ENCODE measurements at regions of chr14 and their contacts with region 1.

Region 1: GRCh38 chr14:105448706-105449111 is 25.9 kb upstream of the CRIP2 start:
- DNase-seq: peak; percentile 55 to 82 (median 65)
- ATAC-seq: peak; percentile 100
- H3K4me3 ChIP-seq: no peak overlapping the region
- H3K4me3 Mint-ChIP-seq: no peak overlapping the region
- H3K27ac ChIP-seq: no peak overlapping the region
- H3K27ac Mint-ChIP-seq: no peak overlapping the region
- H3K4me1 ChIP-seq: peaks cover 7% of the 10 kb centered on the region
- H3K4me1 Mint-ChIP-seq: no peaks in the 10 kb centered on the region
- H3K27me3 ChIP-seq: no peaks in the 10 kb centered on the region
- H3K27me3 Mint-ChIP-seq: no peaks in the 10 kb centered on the region
- CTCF ChIP-seq: peak; percentile 75

Region 2: DNA sequence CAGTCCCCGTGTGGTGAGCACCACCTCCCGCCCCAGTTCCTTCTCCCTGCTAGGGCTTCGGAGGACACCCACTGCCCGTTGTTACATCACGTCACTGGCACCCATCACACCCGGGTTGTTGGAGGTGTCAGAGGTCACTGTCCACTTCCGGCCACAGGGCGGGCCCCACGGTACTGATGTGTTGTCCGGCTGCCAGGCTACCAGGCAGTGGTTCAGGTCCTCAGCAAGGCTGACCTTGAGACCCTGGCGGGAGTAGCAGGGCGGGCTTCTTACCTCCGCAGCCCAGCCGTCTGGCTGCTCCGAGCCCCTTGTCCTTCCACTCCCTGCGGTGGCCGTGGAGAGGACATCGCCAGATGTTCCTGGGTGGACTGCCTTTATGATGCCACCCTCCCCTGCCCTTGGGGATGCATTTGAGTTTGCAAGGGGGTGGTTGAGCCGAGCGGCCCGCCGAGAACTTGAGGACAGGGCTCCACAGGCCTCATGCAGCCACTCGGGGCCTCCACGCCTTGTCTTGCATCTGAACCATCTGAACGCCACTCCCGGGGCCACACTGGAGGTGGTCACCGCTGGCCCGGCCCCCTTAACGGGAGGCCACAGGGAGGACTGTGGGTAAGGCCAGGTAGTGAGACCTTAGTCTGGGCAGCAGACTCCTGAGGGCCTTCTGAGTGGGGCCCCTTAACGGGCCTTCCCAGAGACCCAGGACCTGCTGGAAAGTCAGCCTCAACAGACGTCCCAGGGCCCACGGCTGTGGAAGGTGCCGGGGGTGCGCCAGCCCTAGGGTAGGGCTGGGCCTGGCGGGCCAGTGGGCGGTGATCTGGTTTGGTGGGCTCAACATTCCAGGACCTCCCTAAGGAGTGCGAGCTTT is 551.1 kb before region 1 on chr14:
- CTCF ChIA-PET with region 1: no interaction called
- POLR2A ChIA-PET with region 1: no interaction called
- intact Hi-C with region 1: no loop called
- DNase-seq: peak in 1 of 14 experiments; percentile 27
- ATAC-seq: no peak
- H3K4me3 ChIP-seq: no peak overlapping the region
- H3K4me3 Mint-ChIP-seq: no peak overlapping the region
- H3K27ac ChIP-seq: no peak overlapping the region
- H3K27ac Mint-ChIP-seq: no peak overlapping the region
- H3K4me1 ChIP-seq: no peaks in the 10 kb centered on the region
- H3K4me1 Mint-ChIP-seq: peaks cover 4% of the 10 kb centered on the region
- H3K27me3 ChIP-seq: no peaks in the 10 kb centered on the region
- H3K27me3 Mint-ChIP-seq: no peaks in the 10 kb centered on the region
- CTCF ChIP-seq: no peak

Region 3: DNA sequence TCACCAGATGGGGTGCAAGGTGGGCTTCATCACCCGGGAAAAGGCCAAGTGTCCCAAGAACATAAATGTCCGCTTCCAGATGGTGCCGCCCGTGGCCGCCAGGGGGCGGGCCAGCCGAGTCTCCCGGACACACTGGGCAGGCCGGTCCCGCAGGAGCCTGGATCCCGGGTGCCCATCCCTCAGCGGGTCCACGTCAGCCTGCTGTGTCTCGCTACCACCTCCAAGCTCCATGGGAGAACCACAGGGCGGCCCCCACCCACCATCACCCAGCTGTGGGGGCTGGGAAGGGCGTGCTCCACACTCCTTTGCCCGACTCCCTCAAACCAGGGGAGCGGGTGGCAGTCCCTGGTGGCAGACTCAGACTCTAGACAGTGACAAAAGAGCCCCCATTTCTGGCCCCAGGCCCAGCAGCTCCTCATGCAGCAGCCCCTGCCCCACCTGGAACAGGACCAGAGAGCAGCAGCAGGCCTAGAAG is 245.6 kb before region 1 on chr14:
- CTCF ChIA-PET with region 1: no interaction called
- POLR2A ChIA-PET with region 1: no interaction called
- intact Hi-C with region 1: no loop called
- DNase-seq: peak; percentile 40 to 76 (median 52)
- ATAC-seq: peak; percentile 48
- H3K4me3 ChIP-seq: no peak overlapping the region
- H3K4me3 Mint-ChIP-seq: no peak overlapping the region
- H3K27ac ChIP-seq: no peak overlapping the region
- H3K27ac Mint-ChIP-seq: no peak overlapping the region
- H3K4me1 ChIP-seq: peaks cover 26% of the 10 kb centered on the region
- H3K4me1 Mint-ChIP-seq: peaks cover 9% of the 10 kb centered on the region
- H3K27me3 ChIP-seq: peaks cover 22 to 27% of the 10 kb centered on the region in 2 experiments
- H3K27me3 Mint-ChIP-seq: peaks cover 31% of the 10 kb centered on the region
- CTCF ChIP-seq: peak; percentile 97

Region 4: GRCh38 chr14:105375635-105376057 is 73.1 kb before region 1 on chr14:
- CTCF ChIA-PET with region 1: interaction called, 4 read pairs
- POLR2A ChIA-PET with region 1: no interaction called
- intact Hi-C with region 1: loop called in 1 of 2 experiments (anchors 1 kb)
- DNase-seq: peak in 4 of 14 experiments; percentile 8 to 53 (median 34)
- ATAC-seq: peak; percentile 16
- H3K4me3 ChIP-seq: no peak overlapping the region
- H3K4me3 Mint-ChIP-seq: no peak overlapping the region
- H3K27ac ChIP-seq: no peak overlapping the region
- H3K27ac Mint-ChIP-seq: no peak overlapping the region
- H3K4me1 ChIP-seq: peaks cover 14% of the 10 kb centered on the region
- H3K4me1 Mint-ChIP-seq: peaks cover 14% of the 10 kb centered on the region
- H3K27me3 ChIP-seq: no peaks in the 10 kb centered on the region
- H3K27me3 Mint-ChIP-seq: no peaks in the 10 kb centered on the region
- CTCF ChIP-seq: no peak

Region 5: GRCh38 chr14:106578481-106578880 is 1129.8 kb after region 1 on chr14:
- CTCF ChIA-PET with region 1: no interaction called
- POLR2A ChIA-PET with region 1: no interaction called
- intact Hi-C with region 1: no loop called
- DNase-seq: no peak
- ATAC-seq: no peak
- H3K4me3 ChIP-seq: no peak overlapping the region
- H3K4me3 Mint-ChIP-seq: no peak overlapping the region
- H3K27ac ChIP-seq: no peak overlapping the region
- H3K27ac Mint-ChIP-seq: no peak overlapping the region
- H3K4me1 ChIP-seq: no peaks in the 10 kb centered on the region
- H3K4me1 Mint-ChIP-seq: no peaks in the 10 kb centered on the region
- H3K27me3 ChIP-seq: peaks cover 6 to 13% of the 10 kb centered on the region in 2 experiments
- H3K27me3 Mint-ChIP-seq: peaks cover 50% of the 10 kb centered on the region
- CTCF ChIP-seq: no peak